Panc1 (cell line): ENCODE measurements at regions of chr6 and their contacts with region 1.

Region 1: DNA sequence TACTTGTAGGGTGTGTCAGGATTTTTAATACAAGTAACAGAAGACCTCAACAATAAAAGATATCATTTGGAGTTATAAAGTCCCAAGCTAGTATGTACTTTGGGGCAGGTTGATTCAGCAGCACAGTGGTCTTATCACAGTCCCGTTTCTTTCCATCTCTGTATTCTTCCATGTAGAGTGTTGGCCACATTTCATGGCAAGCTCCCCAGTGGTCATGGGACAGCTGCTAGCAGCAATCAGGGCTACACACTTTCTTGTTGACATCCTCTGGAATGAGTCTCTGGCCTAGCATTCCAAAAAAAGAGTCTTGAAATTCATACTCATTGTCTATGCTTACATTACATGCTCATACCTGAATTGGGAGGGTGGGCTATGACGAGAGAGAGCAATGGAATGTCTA is 53.2 kb downstream of the SOBP start:
- DNase-seq: no peak
- ATAC-seq: no peak
- H3K4me3 ChIP-seq: no peak overlapping the region
- H3K27ac ChIP-seq: no peak overlapping the region
- H3K4me1 ChIP-seq: peaks cover 12% of the 10 kb centered on the region
- H3K27me3 ChIP-seq: no peaks in the 10 kb centered on the region
- CTCF ChIP-seq: no peak

Region 2: DNA sequence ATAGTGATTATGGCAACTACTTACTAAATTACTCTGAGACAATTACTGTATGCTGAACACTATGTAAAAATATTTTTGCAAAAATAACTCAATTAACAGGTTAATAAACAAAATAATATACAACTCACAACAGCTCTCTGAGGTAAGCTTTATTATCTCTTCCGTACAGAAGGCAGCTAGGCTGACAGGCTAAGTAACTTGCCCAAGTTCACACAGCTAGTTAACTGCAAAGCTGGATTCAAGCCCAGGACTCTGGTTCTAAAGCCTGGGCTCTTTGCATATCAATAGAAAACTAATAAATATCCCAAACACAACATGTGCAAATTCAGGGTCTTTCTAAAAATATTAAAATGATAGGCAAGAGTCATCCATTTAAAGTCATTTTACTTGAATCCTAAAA is 258.3 kb before region 1 on chr6:
- CTCF ChIA-PET with region 1: no interaction called
- POLR2A ChIA-PET with region 1: no interaction called
- in situ Hi-C with region 1: no loop called
- intact Hi-C with region 1: no loop called
- DNase-seq: no peak
- ATAC-seq: no peak
- H3K4me3 ChIP-seq: no peak overlapping the region
- H3K27ac ChIP-seq: no peak overlapping the region
- H3K4me1 ChIP-seq: no peaks in the 10 kb centered on the region
- H3K27me3 ChIP-seq: no peaks in the 10 kb centered on the region
- CTCF ChIP-seq: no peak

Region 3: DNA sequence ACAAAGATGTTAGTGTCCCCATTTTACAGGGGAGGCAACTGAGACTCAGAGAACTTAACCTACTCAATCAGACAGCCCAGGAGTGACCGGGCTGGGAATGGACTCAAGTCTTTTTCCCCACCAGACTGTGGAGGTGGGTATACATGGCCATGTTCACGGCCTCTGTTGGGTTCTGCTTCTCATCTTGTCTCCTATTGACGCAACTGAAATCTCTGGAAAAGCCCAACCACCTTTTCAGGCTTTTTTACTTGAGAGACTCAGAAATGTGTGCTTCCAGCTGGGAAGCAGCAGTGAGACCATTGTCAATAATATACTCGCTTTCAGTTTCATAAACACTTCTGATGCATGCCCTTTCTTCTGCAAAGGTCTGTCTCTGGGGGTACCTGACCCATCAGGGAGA is 17.6 kb after region 1 on chr6:
- CTCF ChIA-PET with region 1: no interaction called
- POLR2A ChIA-PET with region 1: interaction called, 11 read pairs
- in situ Hi-C with region 1: no loop called
- intact Hi-C with region 1: no loop called
- DNase-seq: no peak
- ATAC-seq: no peak
- H3K4me3 ChIP-seq: no peak overlapping the region
- H3K27ac ChIP-seq: no peak overlapping the region
- H3K4me1 ChIP-seq: peaks cover 8% of the 10 kb centered on the region
- H3K27me3 ChIP-seq: no peaks in the 10 kb centered on the region
- CTCF ChIP-seq: no peak

Region 4: GRCh38 chr6:107763946-107764345 is 220.9 kb after region 1 on chr6:
- CTCF ChIA-PET with region 1: no interaction called
- POLR2A ChIA-PET with region 1: interaction called, 10 read pairs
- in situ Hi-C with region 1: no loop called
- intact Hi-C with region 1: no loop called
- DNase-seq: no peak
- ATAC-seq: no peak
- H3K4me3 ChIP-seq: no peak overlapping the region
- H3K27ac ChIP-seq: no peak overlapping the region
- H3K4me1 ChIP-seq: no peaks in the 10 kb centered on the region
- H3K27me3 ChIP-seq: peaks cover 9% of the 10 kb centered on the region; the same call in 1 of the 2 replicates
- CTCF ChIP-seq: no peak